Lower leg skin (tissue), 4 donors: ENCODE measurements at regions of chr1 and their contacts with region 1.

Region 1: GRCh38 chr1:69252696-69253095 is 315.0 kb upstream of the LRRC7 start:
- DNase-seq: no peak
- H3K4me3 ChIP-seq: no peak overlapping the region
- CTCF ChIP-seq: no peak
- POLR2A ChIP-seq: no peak

Region 2: DNA sequence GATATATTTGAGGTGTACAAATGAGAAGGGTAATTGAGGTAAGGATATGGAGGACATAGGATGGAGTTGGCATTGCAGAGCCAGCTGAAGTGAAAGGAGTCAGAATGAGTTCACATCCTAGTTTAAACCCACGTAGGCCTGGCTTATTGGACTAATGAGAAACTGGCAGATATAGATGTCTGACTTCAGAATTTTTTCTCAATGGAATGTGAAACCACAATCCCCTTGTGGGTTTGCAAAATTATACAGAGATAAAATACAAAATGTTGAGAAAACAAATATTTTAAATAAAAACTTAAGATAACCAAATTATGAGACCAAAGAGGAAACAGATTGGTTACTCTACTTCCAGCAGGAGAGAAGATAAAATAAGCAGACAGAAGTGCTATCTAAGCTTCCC is 37.6 kb after region 1 on chr1:
- intact Hi-C with region 1: loop called (anchors 1 kb)
- DNase-seq: no peak
- H3K4me3 ChIP-seq: no peak overlapping the region
- CTCF ChIP-seq: no peak
- POLR2A ChIP-seq: no peak

Region 3: GRCh38 chr1:69585666-69586065 is 333.0 kb after region 1 on chr1:
- intact Hi-C with region 1: no loop called
- DNase-seq: no peak
- H3K4me3 ChIP-seq: no peak overlapping the region
- CTCF ChIP-seq: no peak
- POLR2A ChIP-seq: no peak